Activated CD4-positive, alpha-beta memory T cell treated with anti-CD3 and anti-CD28 coated beads, Interleukin-2, amount 10 ng/mL, durations not matched to agents 7 days and 5 days (primary cell): ENCODE measurements at regions of chr6 and their contacts with region 1.

Region 1: DNA sequence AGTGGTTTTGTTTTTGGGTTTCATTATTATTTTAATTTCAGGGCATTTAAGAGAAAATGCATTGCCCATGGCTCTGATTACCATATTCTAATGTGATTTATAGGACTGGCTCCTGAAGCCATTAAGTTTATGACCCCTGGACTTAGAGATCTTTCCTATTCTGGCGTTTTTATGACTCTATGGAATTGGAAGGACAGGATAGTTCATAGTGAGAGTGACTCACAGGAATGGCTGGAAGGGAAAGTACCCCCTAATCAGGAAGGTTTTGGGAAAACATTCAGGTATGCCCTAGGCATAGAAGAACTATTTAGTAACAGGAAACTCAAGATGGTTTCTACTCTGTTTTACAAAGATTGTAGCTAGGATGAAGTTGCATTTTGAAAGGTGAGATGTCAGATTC is 108.6 kb upstream of the SLC2A12 start:
- DNase-seq: no peak
- H3K4me3 Mint-ChIP-seq: no peak overlapping the region
- H3K27ac Mint-ChIP-seq: no peak overlapping the region
- H3K4me1 Mint-ChIP-seq: no peaks in the 10 kb centered on the region
- H3K27me3 Mint-ChIP-seq: no peaks in the 10 kb centered on the region

Region 2: GRCh38 chr6:134035823-134036296 is 125.2 kb before region 1 on chr6:
- CTCF ChIA-PET with region 1: no interaction called
- POLR2A ChIA-PET with region 1: no interaction called
- DNase-seq: no peak
- H3K4me3 Mint-ChIP-seq: no peak overlapping the region
- H3K27ac Mint-ChIP-seq: no peak overlapping the region
- H3K4me1 Mint-ChIP-seq: peaks cover 24% of the 10 kb centered on the region
- H3K27me3 Mint-ChIP-seq: peaks cover under 1% of the 10 kb centered on the region

Region 3: DNA sequence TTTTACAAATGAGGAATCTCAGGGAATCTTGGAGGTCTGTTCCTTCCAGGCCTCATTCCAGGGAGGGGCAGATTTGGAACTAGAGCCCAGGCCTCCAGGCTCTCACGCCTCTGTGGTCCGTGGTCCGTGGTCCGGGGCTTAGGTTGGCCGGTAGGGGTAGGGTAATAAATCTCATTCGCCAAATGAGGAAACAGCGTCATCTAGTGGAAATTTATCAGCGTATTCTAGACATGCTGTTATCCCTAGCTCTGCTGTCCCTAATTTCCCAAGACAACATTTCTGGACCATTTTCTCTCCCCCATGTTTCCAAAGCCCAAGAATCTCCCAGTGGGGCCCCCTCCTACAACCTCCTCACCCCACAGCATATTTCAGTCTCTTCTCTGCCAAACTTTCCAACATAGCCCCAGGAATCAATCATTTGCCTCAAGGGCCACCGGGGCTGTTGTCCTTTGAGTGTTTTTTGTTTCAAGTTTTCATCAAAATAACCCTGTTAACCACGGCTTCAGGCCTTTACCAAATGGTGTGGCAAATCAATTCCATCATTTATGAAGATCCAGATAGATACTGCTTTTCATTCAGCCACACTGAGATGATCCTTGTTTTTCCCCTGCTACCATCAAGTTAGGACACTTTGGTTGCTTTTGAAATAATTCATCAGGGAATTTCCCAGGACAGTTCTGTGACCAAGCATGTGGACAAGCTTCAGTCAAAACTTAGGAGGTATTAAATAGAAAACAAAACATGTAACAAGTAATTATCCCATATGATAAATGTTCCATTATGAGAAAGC is 662.1 kb after region 1 on chr6:
- CTCF ChIA-PET with region 1: interaction called, 19 read pairs
- POLR2A ChIA-PET with region 1: no interaction called
- DNase-seq: peak; percentile 31
- H3K4me3 Mint-ChIP-seq: no peak overlapping the region
- H3K27ac Mint-ChIP-seq: no peak overlapping the region
- H3K4me1 Mint-ChIP-seq: peaks cover 3% of the 10 kb centered on the region
- H3K27me3 Mint-ChIP-seq: peaks cover 5% of the 10 kb centered on the region